Prostate gland (tissue), 2 donors: ENCODE measurements at regions of chr1 and their contacts with region 1.

Region 1: GRCh38 chr1:115706587-115707425 is 61.7 kb downstream of the CASQ2 start:
- DNase-seq: no peak
- H3K4me3 ChIP-seq: no peak overlapping the region
- H3K27ac ChIP-seq: no peak overlapping the region
- H3K4me1 ChIP-seq: peaks cover 3% of the 10 kb centered on the region
- H3K27me3 ChIP-seq: no peaks in the 10 kb centered on the region
- CTCF ChIP-seq: peak; percentile 21 to 76 (median 36)
- POLR2A ChIP-seq: no peak

Region 2: DNA sequence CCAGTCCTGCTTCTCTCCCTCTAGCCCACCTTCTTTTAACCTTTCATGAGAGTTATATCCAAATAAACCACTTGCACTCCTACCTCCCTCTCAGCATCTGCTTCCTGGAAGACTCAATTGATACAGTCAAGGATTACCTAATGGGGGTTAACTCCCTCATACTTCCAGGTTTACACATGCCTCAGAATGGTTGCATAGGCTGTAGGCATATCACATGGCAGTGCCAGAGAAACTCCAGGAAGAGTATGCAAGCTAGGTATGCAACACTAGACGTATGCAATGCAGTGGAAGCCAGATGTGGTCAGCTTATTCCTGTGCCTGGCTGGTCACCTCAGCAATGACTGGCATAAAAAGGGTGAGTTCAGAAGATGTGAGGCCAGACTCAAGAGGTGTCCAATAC is 97.8 kb before region 1 on chr1:
- intact Hi-C with region 1: loop called (anchors 5 kb)
- DNase-seq: no peak
- H3K4me3 ChIP-seq: no peak overlapping the region
- H3K27ac ChIP-seq: no peak overlapping the region
- H3K4me1 ChIP-seq: no peaks in the 10 kb centered on the region
- H3K27me3 ChIP-seq: no peaks in the 10 kb centered on the region
- CTCF ChIP-seq: no peak
- POLR2A ChIP-seq: no peak